Activated naive CD4-positive, alpha-beta T cell treated with anti-CD3 and anti-CD28 coated beads for 36 hours (primary cell): ENCODE measurements at regions of chr9 and their contacts with region 1.

Region 1: GRCh38 chr9:88593537-88594185 is 58.7 kb downstream of the NXNL2 start:
- DNase-seq: peak; percentile 74
- H3K4me3 Mint-ChIP-seq: no peak overlapping the region
- H3K27ac Mint-ChIP-seq: no peak overlapping the region
- H3K4me1 Mint-ChIP-seq: peaks cover 5% of the 10 kb centered on the region
- H3K27me3 Mint-ChIP-seq: peaks cover 6% of the 10 kb centered on the region

Region 2: GRCh38 chr9:88173378-88173999 is 420.2 kb before region 1 on chr9:
- CTCF ChIA-PET with region 1: no interaction called
- intact Hi-C with region 1: loop called (anchors 5 kb)
- DNase-seq: peak; percentile 75
- H3K4me3 Mint-ChIP-seq: no peak overlapping the region
- H3K27ac Mint-ChIP-seq: no peak overlapping the region
- H3K4me1 Mint-ChIP-seq: peaks cover 4% of the 10 kb centered on the region
- H3K27me3 Mint-ChIP-seq: peaks cover 6% of the 10 kb centered on the region

Region 3: GRCh38 chr9:88741335-88741734 is 147.7 kb after region 1 on chr9:
- CTCF ChIA-PET with region 1: interaction called, 3 read pairs
- intact Hi-C with region 1: loop called (anchors 1 kb)
- DNase-seq: peak; percentile 45
- H3K4me3 Mint-ChIP-seq: no peak overlapping the region
- H3K27ac Mint-ChIP-seq: no peak overlapping the region
- H3K4me1 Mint-ChIP-seq: no peaks in the 10 kb centered on the region
- H3K27me3 Mint-ChIP-seq: peaks cover 2% of the 10 kb centered on the region

Region 4: DNA sequence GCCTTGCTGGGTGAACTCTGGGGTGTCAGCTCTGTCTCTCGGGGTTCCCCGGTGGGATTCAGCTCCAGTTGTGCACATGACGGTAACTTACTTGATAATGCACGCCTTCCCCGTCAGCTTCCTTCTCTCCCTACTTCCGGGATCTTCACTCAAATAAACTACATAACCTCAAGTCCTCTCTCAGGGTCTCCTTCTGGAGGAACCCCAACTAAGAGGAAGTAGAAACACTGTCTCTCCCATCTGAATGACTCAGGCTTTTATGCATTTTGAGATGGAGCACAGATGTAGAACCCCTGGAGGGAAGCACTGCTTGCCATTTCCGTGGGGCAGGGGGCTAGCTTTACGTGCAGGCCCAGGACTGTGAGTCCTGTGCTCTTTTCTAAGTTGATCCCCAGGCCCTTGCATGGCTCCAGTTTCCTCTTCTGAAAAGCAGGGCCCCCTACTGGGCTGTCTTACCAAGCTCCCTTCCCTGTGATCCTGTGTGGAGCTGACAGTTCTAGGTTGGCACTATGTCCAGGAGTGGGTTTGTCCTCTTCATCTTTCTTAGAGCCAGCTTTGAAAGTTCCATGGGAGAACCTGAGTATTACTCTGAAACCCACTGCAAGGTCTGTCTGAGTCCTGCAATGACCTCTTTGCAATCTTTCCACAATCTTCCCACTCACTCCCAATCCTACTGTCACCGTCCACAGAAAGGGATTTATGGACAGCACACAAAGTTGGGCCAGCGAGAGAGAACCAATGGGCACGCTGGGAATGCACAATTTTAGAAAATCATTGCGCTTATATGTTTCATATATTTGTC is 415.3 kb after region 1 on chr9:
- CTCF ChIA-PET with region 1: interaction called, 4 read pairs
- intact Hi-C with region 1: loop called (anchors 2 kb)
- DNase-seq: no peak
- H3K4me3 Mint-ChIP-seq: no peak overlapping the region
- H3K27ac Mint-ChIP-seq: no peak overlapping the region
- H3K4me1 Mint-ChIP-seq: no peaks in the 10 kb centered on the region
- H3K27me3 Mint-ChIP-seq: peaks cover 4% of the 10 kb centered on the region

Region 5: GRCh38 chr9:89278997-89279739 is 685.5 kb after region 1 on chr9:
- CTCF ChIA-PET with region 1: no interaction called
- intact Hi-C with region 1: loop called (anchors 2 kb)
- DNase-seq: peak; percentile 38
- H3K4me3 Mint-ChIP-seq: no peak overlapping the region
- H3K27ac Mint-ChIP-seq: no peak overlapping the region
- H3K4me1 Mint-ChIP-seq: peaks cover 41% of the 10 kb centered on the region
- H3K27me3 Mint-ChIP-seq: peaks cover 1% of the 10 kb centered on the region